ENCODE measurements at regions of chr4 and their contacts with region 1.

Region 1: GRCh38 chr4:98260579-98261290 is 449 bp upstream of the RAP1GDS1 start:
- DNase-seq: peak; percentile 67 to 95 (median 88)
- ATAC-seq: peak; percentile 72
- H3K4me3 ChIP-seq: peak overlapping the region; percentile 89 to 96
- H3K4me3 Mint-ChIP-seq: peak overlapping the region; percentile 94
- H3K27ac ChIP-seq: peak overlapping the region; percentile 77 to 79
- H3K27ac Mint-ChIP-seq: peak overlapping the region; percentile 95
- H3K4me1 ChIP-seq: peaks cover 27% of the 10 kb centered on the region
- H3K4me1 Mint-ChIP-seq: peaks cover 51% of the 10 kb centered on the region
- H3K27me3 ChIP-seq: no peaks in the 10 kb centered on the region
- H3K27me3 Mint-ChIP-seq: no peaks in the 10 kb centered on the region
- CTCF ChIP-seq: no peak

Region 2: GRCh38 chr4:98352396-98352795 is 91.7 kb after region 1 on chr4:
- CTCF ChIA-PET with region 1: no interaction called
- POLR2A ChIA-PET with region 1: no interaction called
- intact Hi-C with region 1: loop called in 1 of 2 experiments (anchors 10 kb)
- DNase-seq: no peak
- ATAC-seq: no peak
- H3K4me3 ChIP-seq: no peak overlapping the region
- H3K4me3 Mint-ChIP-seq: no peak overlapping the region
- H3K27ac ChIP-seq: no peak overlapping the region
- H3K27ac Mint-ChIP-seq: no peak overlapping the region
- H3K4me1 ChIP-seq: no peaks in the 10 kb centered on the region
- H3K4me1 Mint-ChIP-seq: peaks cover 12% of the 10 kb centered on the region
- H3K27me3 ChIP-seq: no peaks in the 10 kb centered on the region
- H3K27me3 Mint-ChIP-seq: no peaks in the 10 kb centered on the region
- CTCF ChIP-seq: no peak

Region 3: GRCh38 chr4:98446499-98447375 is 186.0 kb after region 1 on chr4:
- CTCF ChIA-PET with region 1: no interaction called
- POLR2A ChIA-PET with region 1: no interaction called
- intact Hi-C with region 1: loop called (anchors 5 kb)
- DNase-seq: peak; percentile 18 to 88 (median 65)
- ATAC-seq: peak; percentile 87
- H3K4me3 ChIP-seq: peak overlapping the region; percentile 9 to 16
- H3K4me3 Mint-ChIP-seq: peak overlapping the region; percentile 68
- H3K27ac ChIP-seq: peak overlapping the region in 1 of 2 experiments; percentile 68
- H3K27ac Mint-ChIP-seq: peak overlapping the region; percentile 90
- H3K4me1 ChIP-seq: peaks cover 35% of the 10 kb centered on the region
- H3K4me1 Mint-ChIP-seq: peaks cover 38% of the 10 kb centered on the region
- H3K27me3 ChIP-seq: no peaks in the 10 kb centered on the region
- H3K27me3 Mint-ChIP-seq: no peaks in the 10 kb centered on the region
- CTCF ChIP-seq: no peak

Region 4: DNA sequence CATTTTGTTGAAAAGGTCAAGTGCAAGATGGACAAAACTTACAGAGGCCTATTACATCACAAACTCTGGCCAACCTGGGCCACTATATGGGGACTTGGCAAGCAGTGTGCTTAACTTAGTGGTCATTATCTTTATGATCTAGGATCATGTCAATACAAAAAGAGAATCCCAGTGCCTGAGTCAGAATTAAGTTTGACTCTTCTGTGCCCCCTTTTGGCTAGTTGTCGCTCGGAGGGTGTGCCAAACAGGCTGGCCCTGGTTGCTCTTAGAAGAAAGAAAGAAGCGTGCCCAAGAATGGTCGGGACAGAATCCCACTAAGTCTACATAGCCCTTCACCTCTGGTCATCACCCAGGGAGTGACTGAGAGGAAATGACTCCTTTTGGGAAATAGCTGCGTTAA is 568.1 kb after region 1 on chr4:
- CTCF ChIA-PET with region 1: no interaction called
- POLR2A ChIA-PET with region 1: no interaction called
- intact Hi-C with region 1: loop called in 1 of 2 experiments (anchors 2 kb)
- DNase-seq: peak in 7 of 9 experiments; percentile 14 to 56 (median 38)
- ATAC-seq: no peak
- H3K4me3 ChIP-seq: no peak overlapping the region
- H3K4me3 Mint-ChIP-seq: no peak overlapping the region
- H3K27ac ChIP-seq: no peak overlapping the region
- H3K27ac Mint-ChIP-seq: no peak overlapping the region
- H3K4me1 ChIP-seq: no peaks in the 10 kb centered on the region
- H3K4me1 Mint-ChIP-seq: no peaks in the 10 kb centered on the region
- H3K27me3 ChIP-seq: peaks cover 0 to 3% of the 10 kb centered on the region in 2 experiments
- H3K27me3 Mint-ChIP-seq: no peaks in the 10 kb centered on the region
- CTCF ChIP-seq: no peak

Measured in CD8-positive, alpha-beta T cell (primary cell).